H1 (cell line): ENCODE measurements at regions of chr2 and their contacts with region 1.

Region 1: DNA sequence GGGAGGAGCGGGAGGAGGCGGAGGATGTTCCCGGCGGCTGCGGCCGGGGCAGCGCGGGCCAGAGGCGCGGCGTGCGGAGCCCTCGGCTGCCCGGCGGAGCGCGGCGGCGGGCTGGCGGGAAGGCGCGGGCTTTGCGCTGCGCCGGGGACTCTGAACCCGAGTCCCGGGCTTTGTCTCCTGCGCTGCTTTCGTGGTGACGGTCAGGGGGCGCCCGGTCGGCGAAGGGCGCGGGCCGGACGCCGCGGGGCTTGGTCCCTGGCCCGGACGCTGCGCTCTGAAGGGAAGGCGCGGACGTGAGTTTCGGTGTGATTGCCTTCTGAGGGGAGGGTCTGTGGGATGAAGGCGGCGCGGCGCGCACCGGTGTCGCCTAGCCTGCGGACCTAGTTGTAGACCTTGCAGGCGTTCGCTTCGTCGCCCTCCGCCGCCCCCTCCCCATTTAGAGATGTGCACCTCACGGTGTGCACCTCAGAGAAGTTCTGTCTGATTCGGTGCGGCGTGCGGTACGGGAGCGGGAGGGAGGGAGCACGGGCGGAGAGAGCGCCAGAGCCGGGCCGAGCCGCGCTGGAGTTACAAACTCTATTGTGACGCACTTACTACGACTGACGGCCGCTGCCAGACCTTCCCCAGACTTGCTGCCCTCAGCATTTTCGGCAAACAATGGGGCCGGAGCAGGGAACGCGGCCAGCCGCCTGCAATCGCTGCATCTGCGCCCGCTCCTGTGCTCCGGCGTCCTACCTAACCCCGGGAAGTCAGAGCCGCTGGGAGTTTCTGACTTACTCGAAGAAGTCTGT is 2.1 kb downstream of the BCL2L11 start:
- DNase-seq: peak in 1 of 2 experiments; percentile 81
- H3K4me3 ChIP-seq: peak overlapping the region; percentile 74 to 93 (median 90)
- H3K27ac ChIP-seq: peak overlapping the region; percentile 64; the same call in 1 of the 2 replicates
- H3K4me1 ChIP-seq: peaks cover 0 to 27% (median 13%) of the 10 kb centered on the region in 4 experiments; a peak in 5 of 7 replicates
- H3K27me3 ChIP-seq: peaks cover 17 to 36% (median 31%) of the 10 kb centered on the region in 4 experiments; a peak in 6 of 7 replicates
- CTCF ChIP-seq: no peak
- EP300 ChIP-seq: 0 out of 3 replicates have a peak, but pooled peaks of 1 of the 2 experiments have one; percentile 9
- POLR2A ChIP-seq: no peak; a peak in 1 of 3 replicates
- RAD21 ChIP-seq: no peak; a peak in 1 of 4 replicates

Region 2: GRCh38 chr2:111042772-111043771 is 79.8 kb before region 1 on chr2:
- CTCF ChIA-PET with region 1: no interaction called
- POLR2A ChIA-PET with region 1: no interaction called
- DNase-seq: peak in 1 of 2 experiments; percentile 35
- H3K4me3 ChIP-seq: no peak overlapping the region
- H3K27ac ChIP-seq: no peak overlapping the region
- H3K4me1 ChIP-seq: no peaks in the 10 kb centered on the region; a peak in 1 of 7 replicates
- H3K27me3 ChIP-seq: no peaks in the 10 kb centered on the region
- CTCF ChIP-seq: no peak
- EP300 ChIP-seq: no peak
- POLR2A ChIP-seq: no peak
- RAD21 ChIP-seq: no peak

Region 3: DNA sequence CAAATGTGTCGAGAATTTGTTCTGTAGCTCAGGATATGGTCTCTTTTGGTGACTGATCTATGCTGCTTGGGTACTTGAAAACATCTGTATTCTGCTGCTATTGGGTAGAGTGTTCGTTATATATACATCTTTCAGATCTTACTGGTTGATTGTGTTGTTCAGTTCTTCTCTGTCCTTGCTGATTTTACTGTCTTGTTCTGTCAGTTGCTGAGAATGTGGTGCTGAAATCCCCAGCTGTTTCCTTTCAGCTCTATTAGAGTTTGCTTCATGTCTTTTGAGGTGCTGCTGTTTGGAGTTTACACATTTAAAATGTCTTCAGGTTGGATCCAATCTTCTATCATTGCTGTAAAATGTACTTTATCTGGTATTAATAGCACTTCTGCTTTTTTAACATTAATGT is 10.8 kb after region 1 on chr2:
- CTCF ChIA-PET with region 1: interaction called, 10 read pairs
- POLR2A ChIA-PET with region 1: interaction called, 8 read pairs
- DNase-seq: no peak
- H3K4me3 ChIP-seq: no peak overlapping the region
- H3K27ac ChIP-seq: no peak overlapping the region
- H3K4me1 ChIP-seq: peaks cover 0 to 5% (median 0%) of the 10 kb centered on the region in 4 experiments; a peak in 2 of 7 replicates
- H3K27me3 ChIP-seq: no peaks in the 10 kb centered on the region
- CTCF ChIP-seq: no peak
- EP300 ChIP-seq: no peak
- POLR2A ChIP-seq: no peak
- RAD21 ChIP-seq: no peak